Panc1 (cell line): ENCODE measurements at regions of chr6 and their contacts with region 1.

Region 1: DNA sequence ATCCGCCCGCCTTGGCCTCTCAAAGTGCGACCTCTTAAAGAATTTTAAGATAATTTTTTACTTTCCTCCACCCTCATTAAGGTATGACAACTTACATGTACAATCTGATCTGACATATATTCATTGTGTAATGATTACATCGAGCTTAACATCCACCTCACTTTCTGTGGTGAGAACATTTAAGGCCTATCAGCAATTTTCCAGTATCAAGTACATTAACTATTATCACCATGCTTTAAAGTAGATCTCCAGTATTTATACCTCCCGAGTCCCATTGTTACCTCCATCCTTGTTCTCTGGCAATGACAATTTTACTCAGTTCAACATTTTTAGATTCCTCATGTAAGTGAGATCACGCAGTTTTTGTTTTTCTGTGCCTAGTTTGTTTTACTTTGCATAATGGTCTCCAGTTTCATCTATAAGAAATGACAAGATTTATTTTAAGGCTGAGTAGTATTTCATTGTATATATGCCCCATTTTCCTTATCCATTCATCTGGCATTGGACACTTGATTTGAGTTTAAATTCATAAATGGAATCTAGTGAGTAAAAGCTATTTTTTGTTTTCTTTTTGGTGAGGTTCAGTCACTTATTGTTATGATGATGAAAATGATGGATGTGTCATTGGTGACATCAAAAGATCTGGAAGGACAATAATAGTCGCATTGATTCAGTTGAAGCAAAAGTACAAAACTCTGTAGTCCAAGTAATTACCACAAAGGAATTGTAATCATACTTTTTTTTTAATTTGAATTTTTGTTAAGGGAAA is 87.0 kb downstream of the OR2B2 start:
- DNase-seq: no peak
- ATAC-seq: peak; percentile 10; the same call in 1 of the 2 replicates
- H3K4me3 ChIP-seq: peak overlapping the region; percentile 68 to 89
- H3K27ac ChIP-seq: peak overlapping the region; percentile 89
- H3K4me1 ChIP-seq: peaks cover 2% of the 10 kb centered on the region; the same call in 1 of the 2 replicates
- H3K27me3 ChIP-seq: no peaks in the 10 kb centered on the region
- CTCF ChIP-seq: no peak

Region 2: GRCh38 chr6:27726620-27727023 is 98.6 kb before region 1 on chr6:
- CTCF ChIA-PET with region 1: no interaction called
- POLR2A ChIA-PET with region 1: no interaction called
- in situ Hi-C with region 1: no loop called
- intact Hi-C with region 1: no loop called
- DNase-seq: peak; percentile 71
- ATAC-seq: peak; percentile 97
- H3K4me3 ChIP-seq: peak overlapping the region in 1 of 2 experiments; percentile 17; a peak in 1 of 4 replicates
- H3K27ac ChIP-seq: no peak overlapping the region
- H3K4me1 ChIP-seq: peaks cover 14% of the 10 kb centered on the region
- H3K27me3 ChIP-seq: peaks cover 3% of the 10 kb centered on the region; the same call in 1 of the 2 replicates
- CTCF ChIP-seq: no peak

Region 3: DNA sequence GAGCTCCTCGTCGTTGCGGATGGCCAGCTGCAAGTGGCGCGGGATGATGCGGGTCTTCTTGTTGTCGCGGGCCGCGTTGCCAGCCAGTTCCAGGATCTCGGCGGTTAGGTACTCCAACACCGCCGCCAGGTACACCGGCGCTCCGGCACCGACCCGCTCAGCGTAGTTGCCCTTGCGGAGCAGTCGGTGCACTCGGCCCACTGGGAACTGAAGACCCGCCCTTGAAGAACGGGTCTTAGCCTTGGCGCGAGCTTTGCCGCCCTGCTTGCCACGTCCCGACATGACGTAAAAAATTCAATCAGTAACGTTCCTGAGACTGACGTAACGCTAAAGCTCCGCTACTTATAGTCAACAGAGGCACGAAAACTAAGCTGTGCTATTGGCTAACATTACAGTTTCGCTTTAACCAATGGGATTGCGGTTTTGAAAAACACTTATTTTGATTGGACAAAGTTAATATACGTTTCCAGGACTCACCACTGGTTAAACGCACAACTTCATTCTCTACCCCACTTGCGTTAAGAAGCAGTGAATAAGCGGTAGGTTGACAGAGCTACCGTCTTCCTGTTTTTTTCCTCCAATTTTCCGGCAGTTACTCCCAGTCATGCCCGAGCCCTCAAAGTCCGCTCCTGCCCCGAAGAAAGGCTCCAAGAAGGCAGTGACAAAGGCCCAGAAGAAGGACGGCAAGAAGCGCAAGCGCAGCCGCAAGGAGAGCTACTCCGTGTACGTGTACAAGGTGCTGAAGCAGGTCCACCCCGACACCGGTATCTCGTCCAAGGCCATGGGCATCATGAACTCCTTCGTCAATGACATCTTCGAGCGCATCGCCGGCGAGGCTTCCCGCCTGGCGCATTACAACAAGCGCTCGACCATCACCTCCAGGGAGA is 13.1 kb after region 1 on chr6:
- CTCF ChIA-PET with region 1: no interaction called
- POLR2A ChIA-PET with region 1: interaction called, 11 read pairs
- in situ Hi-C with region 1: no loop called
- intact Hi-C with region 1: no loop called
- DNase-seq: peak; percentile 100
- ATAC-seq: peak; percentile 90
- H3K4me3 ChIP-seq: peak overlapping the region; percentile 86 to 90
- H3K27ac ChIP-seq: peak overlapping the region; percentile 100
- H3K4me1 ChIP-seq: peaks cover 17% of the 10 kb centered on the region; the same call in 1 of the 2 replicates
- H3K27me3 ChIP-seq: no peaks in the 10 kb centered on the region
- CTCF ChIP-seq: no peak

Region 4: GRCh38 chr6:27871924-27872638 is 46.9 kb after region 1 on chr6:
- CTCF ChIA-PET with region 1: no interaction called
- POLR2A ChIA-PET with region 1: interaction called, 22 read pairs
- in situ Hi-C with region 1: loop called (anchors 5 kb)
- intact Hi-C with region 1: no loop called
- DNase-seq: peak; percentile 99
- ATAC-seq: peak; percentile 74
- H3K4me3 ChIP-seq: peak overlapping the region; percentile 60 to 66
- H3K27ac ChIP-seq: peak overlapping the region; percentile 98
- H3K4me1 ChIP-seq: peaks cover 33% of the 10 kb centered on the region
- H3K27me3 ChIP-seq: no peaks in the 10 kb centered on the region
- CTCF ChIP-seq: peak; percentile 62

Region 5: DNA sequence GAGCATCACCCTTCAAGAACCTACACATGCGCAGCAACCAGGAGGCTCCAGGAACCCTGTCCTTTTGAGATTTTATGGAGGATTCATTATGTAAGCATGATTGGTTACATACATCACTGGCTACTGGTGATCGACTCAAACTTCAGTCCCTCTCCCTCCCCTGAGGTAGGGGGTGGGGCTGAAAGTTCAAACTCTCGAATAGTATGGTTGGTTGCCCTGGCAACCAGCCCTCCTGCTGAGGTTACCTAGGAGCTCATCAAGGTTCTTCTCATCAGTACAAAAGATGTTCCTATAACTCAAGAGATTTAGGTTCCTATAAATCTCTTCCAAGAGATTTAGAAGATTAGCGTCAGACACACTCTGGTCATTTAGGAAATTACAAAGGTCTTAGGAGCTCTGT is 378.0 kb after region 1 on chr6:
- CTCF ChIA-PET with region 1: no interaction called
- POLR2A ChIA-PET with region 1: no interaction called
- in situ Hi-C with region 1: no loop called
- intact Hi-C with region 1: no loop called
- DNase-seq: no peak
- ATAC-seq: no peak
- H3K4me3 ChIP-seq: no peak overlapping the region
- H3K27ac ChIP-seq: no peak overlapping the region
- H3K4me1 ChIP-seq: peaks cover 3% of the 10 kb centered on the region; the same call in 1 of the 2 replicates
- H3K27me3 ChIP-seq: no peaks in the 10 kb centered on the region
- CTCF ChIP-seq: no peak

Region 6: GRCh38 chr6:28907394-28907793 is 1082.2 kb after region 1 on chr6:
- CTCF ChIA-PET with region 1: no interaction called
- POLR2A ChIA-PET with region 1: interaction called, 12 read pairs
- in situ Hi-C with region 1: no loop called
- intact Hi-C with region 1: no loop called
- DNase-seq: no peak
- ATAC-seq: no peak
- H3K4me3 ChIP-seq: no peak overlapping the region
- H3K27ac ChIP-seq: no peak overlapping the region
- H3K4me1 ChIP-seq: no peaks in the 10 kb centered on the region
- H3K27me3 ChIP-seq: no peaks in the 10 kb centered on the region
- CTCF ChIP-seq: no peak